Heart right ventricle (tissue), 16 donors: ENCODE measurements at regions of chr17 and their contacts with region 1.

Region 1: GRCh38 chr17:68161644-68162428 is 86.0 kb upstream of the AMZ2 start:
- DNase-seq: peak; percentile 20 to 30
- ATAC-seq: peak; percentile 71 to 94 (median 91)
- H3K4me3 ChIP-seq: no peak overlapping the region
- H3K27ac ChIP-seq: peak overlapping the region in 9 of 10 donors; percentile 73 to 96 (median 86)
- H3K4me1 ChIP-seq: peaks cover 0 to 33% (median 3%) of the 10 kb centered on the region in 9 donors
- H3K27me3 ChIP-seq: no peaks in the 10 kb centered on the region
- CTCF ChIP-seq: no peak

Region 2: GRCh38 chr17:68048996-68049395 is 112.8 kb before region 1 on chr17:
- intact Hi-C with region 1: loop called in 1 of 10 experiments (anchors 5 kb)
- DNase-seq: no peak
- ATAC-seq: no peak
- H3K4me3 ChIP-seq: no peak overlapping the region
- H3K27ac ChIP-seq: peak overlapping the region in 1 of 10 donors; percentile 23
- H3K4me1 ChIP-seq: peaks cover 0 to 31% (median 15%) of the 10 kb centered on the region in 9 donors
- H3K27me3 ChIP-seq: no peaks in the 10 kb centered on the region
- CTCF ChIP-seq: no peak

Region 3: DNA sequence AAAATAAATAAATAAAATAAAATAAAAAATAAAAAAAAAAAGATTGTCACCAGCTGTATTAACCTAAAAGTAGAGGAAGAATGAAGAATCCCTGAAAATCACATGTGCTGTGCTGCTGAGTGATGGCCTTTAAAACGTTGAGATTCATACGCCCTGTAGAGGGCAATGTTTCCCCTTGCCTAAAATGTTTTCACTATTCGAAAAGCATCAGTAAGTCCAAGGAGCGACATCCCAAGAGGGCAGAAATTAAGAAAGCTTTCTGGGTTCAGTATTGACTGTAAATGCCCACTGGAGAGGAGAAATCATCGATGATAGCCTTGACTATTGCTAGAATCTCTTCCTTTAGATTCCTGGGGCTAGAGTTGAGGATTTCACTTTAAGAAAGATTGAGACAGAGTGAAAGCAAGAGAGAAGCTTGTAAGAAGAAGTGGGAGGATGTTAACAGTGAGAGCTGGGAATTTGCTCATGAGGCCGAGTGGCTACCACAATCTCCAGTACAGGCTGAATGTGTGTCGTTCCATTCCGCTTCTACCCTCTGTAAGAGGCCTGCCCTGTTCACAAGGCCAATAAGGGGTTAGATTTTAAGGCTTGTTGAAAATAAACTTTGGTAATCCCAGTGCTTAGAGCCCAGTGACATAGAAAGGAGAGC is 610.2 kb after region 1 on chr17:
- intact Hi-C with region 1: no loop called
- DNase-seq: peak in 1 of 2 donors; percentile 29
- ATAC-seq: peak; percentile 57 to 84 (median 76)
- H3K4me3 ChIP-seq: peak overlapping the region in 7 of 10 donors; percentile 16 to 40 (median 31)
- H3K27ac ChIP-seq: peak overlapping the region in 8 of 10 donors; percentile 2 to 83 (median 64)
- H3K4me1 ChIP-seq: peaks cover 0 to 29% (median 22%) of the 10 kb centered on the region in 9 donors
- H3K27me3 ChIP-seq: no peaks in the 10 kb centered on the region
- CTCF ChIP-seq: peak; percentile 41 to 71 (median 69)